CD4-positive, alpha-beta memory T cell (primary cell): ENCODE measurements at regions of chr6 and their contacts with region 1.

Region 1: DNA sequence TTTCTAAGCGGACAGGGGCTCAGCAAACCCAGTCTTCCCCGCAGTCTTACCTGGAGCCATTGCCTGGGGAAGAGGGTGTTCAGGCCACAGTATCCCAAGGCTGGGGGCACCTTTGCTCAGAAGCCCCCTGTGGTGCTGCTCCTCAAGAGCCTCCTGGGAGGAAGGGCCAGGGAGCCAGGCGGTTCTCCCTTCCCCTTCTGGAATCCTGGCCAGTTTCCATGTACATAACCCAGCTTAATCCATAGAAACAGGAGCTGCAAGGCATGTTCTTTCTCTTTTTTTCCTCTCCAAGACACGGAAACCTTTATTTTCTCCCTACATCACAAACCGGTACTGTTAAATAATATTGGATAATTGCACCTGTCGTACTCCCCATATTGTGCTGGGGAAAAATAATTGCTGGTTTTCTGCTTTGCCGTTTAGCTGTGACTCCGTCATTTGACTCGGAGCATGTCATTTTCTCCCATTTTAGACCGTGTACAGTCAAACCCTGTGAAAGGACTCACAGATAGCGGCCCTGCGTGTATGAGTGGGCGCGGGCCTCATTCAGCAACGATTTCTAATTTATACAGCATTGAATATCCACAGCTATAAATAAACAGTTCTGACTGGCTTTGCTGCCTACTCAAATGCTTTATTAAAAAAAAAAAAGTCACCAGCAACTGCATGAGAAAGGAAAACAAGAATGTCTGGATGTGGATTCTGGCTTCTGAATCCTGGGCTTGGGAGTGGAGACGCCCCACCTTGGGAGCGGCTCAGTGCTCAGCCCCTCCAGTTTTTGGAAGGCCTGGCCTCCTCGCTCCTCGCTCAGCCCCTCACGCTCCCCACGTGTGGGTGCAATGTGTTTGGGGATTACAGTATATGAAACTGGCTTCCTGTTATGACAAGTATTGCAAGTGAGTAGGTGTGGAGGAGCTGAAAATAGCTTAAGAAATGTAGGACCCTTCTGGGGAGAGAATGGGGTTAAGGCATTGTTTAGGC is 67.3 kb downstream of the ADTRP start:
- DNase-seq: peak in 1 of 5 donors; percentile 27
- H3K4me3 ChIP-seq: no peak overlapping the region
- H3K4me3 Mint-ChIP-seq: peak overlapping the region in 7 of 8 donors; percentile 14 to 85 (median 68)
- H3K27ac ChIP-seq: peak overlapping the region; percentile 39
- H3K27ac Mint-ChIP-seq: peak overlapping the region; percentile 89 to 98 (median 95)
- H3K4me1 ChIP-seq: peaks cover 65% of the 10 kb centered on the region
- H3K4me1 Mint-ChIP-seq: peaks cover 52 to 71% (median 63%) of the 10 kb centered on the region in 4 donors
- H3K27me3 ChIP-seq: no peaks in the 10 kb centered on the region
- H3K27me3 Mint-ChIP-seq: no peaks in the 10 kb centered on the region

Region 2: GRCh38 chr6:11685152-11686093 is 25.9 kb before region 1 on chr6:
- CTCF ChIA-PET with region 1: no interaction called
- POLR2A ChIA-PET with region 1: no interaction called
- intact Hi-C with region 1: no loop called
- DNase-seq: no peak
- H3K4me3 ChIP-seq: no peak overlapping the region
- H3K4me3 Mint-ChIP-seq: no peak overlapping the region
- H3K27ac ChIP-seq: no peak overlapping the region
- H3K27ac Mint-ChIP-seq: no peak overlapping the region
- H3K4me1 ChIP-seq: no peaks in the 10 kb centered on the region
- H3K4me1 Mint-ChIP-seq: no peaks in the 10 kb centered on the region
- H3K27me3 ChIP-seq: no peaks in the 10 kb centered on the region
- H3K27me3 Mint-ChIP-seq: peaks cover 4 to 18% of the 10 kb centered on the region in 2 donors

Region 3: GRCh38 chr6:11722805-11723631 is 11.7 kb after region 1 on chr6:
- CTCF ChIA-PET with region 1: interaction called, 16 read pairs
- POLR2A ChIA-PET with region 1: interaction called, 41 read pairs
- intact Hi-C with region 1: loop called (anchors 1 kb)
- DNase-seq: peak in 3 of 5 donors; percentile 22 to 44 (median 33)
- H3K4me3 ChIP-seq: peak overlapping the region in 1 of 2 donors; percentile 7
- H3K4me3 Mint-ChIP-seq: peak overlapping the region; percentile 67 to 83 (median 74)
- H3K27ac ChIP-seq: peak overlapping the region; percentile 30
- H3K27ac Mint-ChIP-seq: peak overlapping the region; percentile 33 to 95 (median 85)
- H3K4me1 ChIP-seq: peaks cover 26% of the 10 kb centered on the region
- H3K4me1 Mint-ChIP-seq: peaks cover 37 to 51% (median 40%) of the 10 kb centered on the region in 4 donors
- H3K27me3 ChIP-seq: no peaks in the 10 kb centered on the region
- H3K27me3 Mint-ChIP-seq: peaks cover 0 to 3% of the 10 kb centered on the region in 2 donors

Region 4: DNA sequence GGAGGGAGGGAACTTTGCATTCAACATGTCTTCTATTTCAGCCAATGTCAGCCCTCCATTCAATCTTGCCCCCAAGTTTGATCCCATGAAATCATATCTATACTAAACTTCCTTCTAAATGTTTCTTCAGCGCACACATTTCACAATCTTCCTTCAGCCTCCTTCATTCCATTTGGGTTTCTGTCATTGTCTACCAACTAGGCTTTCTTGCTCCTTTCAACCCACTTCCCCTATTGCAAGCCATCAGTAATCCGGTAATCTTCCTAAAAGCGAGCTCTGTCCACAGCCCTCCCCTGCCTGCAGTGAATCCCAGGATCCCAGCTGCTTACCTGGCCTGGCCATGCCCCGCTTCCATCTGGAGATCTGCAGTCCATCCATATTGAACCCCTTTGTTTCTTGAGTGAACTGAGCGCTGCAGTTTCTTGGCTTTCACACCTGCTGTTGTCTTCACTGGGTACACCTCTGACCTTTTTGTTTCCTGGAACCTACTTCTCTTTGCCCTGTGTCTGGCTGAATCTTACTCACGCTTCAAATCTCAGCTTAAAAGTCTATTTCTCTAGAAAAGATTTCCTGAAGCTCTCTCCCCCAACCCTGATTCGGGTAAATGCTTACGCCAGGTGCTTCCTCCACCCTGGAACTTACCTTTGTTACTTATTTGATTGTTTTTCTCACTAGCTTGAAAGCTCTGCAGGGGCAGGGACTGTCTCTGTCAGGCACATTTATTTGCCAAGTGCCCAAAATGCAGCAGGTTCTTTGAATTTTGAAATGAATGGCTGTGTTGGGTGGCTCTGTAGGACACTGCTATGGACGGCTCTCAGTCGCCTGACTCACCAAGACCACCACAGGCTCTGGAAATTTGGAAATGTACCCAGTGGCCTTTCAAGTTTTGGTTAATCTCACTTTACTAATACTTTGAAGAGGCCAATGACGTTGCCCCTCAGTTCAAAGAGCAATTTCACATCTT is 17.0 kb after region 1 on chr6:
- CTCF ChIA-PET with region 1: interaction called, 16 read pairs
- POLR2A ChIA-PET with region 1: interaction called, 41 read pairs
- intact Hi-C with region 1: loop called (anchors 1 kb)
- DNase-seq: peak in 4 of 5 donors; percentile 29 to 51 (median 37)
- H3K4me3 ChIP-seq: peak overlapping the region in 1 of 2 donors; percentile 32
- H3K4me3 Mint-ChIP-seq: peak overlapping the region; percentile 48 to 91 (median 84)
- H3K27ac ChIP-seq: peak overlapping the region; percentile 54
- H3K27ac Mint-ChIP-seq: peak overlapping the region; percentile 78 to 97 (median 91)
- H3K4me1 ChIP-seq: peaks cover 60% of the 10 kb centered on the region
- H3K4me1 Mint-ChIP-seq: peaks cover 52 to 76% (median 57%) of the 10 kb centered on the region in 4 donors
- H3K27me3 ChIP-seq: no peaks in the 10 kb centered on the region
- H3K27me3 Mint-ChIP-seq: peaks cover 0 to 3% of the 10 kb centered on the region in 2 donors

Region 5: GRCh38 chr6:11785774-11786579 is 74.7 kb after region 1 on chr6:
- CTCF ChIA-PET with region 1: no interaction called
- POLR2A ChIA-PET with region 1: interaction called, 13 read pairs
- intact Hi-C with region 1: no loop called
- DNase-seq: peak; percentile 26 to 59 (median 45)
- H3K4me3 ChIP-seq: peak overlapping the region; percentile 14 to 52
- H3K4me3 Mint-ChIP-seq: no peak overlapping the region
- H3K27ac ChIP-seq: peak overlapping the region; percentile 12
- H3K27ac Mint-ChIP-seq: peak overlapping the region in 4 of 7 donors; percentile 69 to 85 (median 75)
- H3K4me1 ChIP-seq: peaks cover 13% of the 10 kb centered on the region
- H3K4me1 Mint-ChIP-seq: peaks cover 0 to 11% (median 6%) of the 10 kb centered on the region in 4 donors
- H3K27me3 ChIP-seq: no peaks in the 10 kb centered on the region
- H3K27me3 Mint-ChIP-seq: peaks cover 0 to 2% of the 10 kb centered on the region in 2 donors

Region 6: DNA sequence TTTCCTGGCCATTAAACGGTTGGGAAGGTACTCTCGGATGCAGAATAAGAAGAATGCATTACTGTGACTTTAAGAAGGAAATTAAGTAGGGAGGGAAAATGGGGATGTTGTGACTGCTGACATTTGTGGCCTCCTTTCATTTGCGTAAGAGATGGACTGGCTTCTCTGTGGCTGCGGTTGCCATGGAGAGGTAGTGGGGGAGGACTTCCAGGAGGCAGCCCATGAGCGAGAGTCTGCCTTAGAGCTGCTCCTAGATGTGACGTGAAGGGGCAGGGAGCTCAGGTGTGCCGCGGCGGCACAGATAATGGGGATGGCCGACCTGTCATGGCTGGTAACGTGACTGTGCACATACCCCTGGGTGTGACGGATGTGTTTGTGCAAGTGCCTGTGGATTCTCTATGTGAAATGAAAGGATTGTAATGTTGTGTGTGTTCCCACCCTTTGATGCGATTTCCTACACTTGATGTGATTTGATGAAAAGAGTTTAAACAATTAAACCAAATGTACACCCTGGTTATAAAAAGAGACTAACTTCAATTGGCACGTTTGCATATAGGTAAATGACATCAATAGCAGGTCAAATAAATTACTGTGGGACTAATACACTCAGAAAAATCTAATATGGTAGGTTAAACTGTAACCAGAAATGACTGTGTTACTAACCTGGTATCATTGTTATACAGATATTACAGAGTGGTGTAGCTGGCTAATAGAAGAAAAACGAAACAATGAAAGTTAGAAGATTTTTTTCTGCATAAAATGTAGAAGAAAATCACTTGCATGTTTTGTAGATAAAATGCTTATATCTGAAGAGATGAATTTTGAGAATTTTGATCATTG is 349.7 kb after region 1 on chr6:
- CTCF ChIA-PET with region 1: no interaction called
- POLR2A ChIA-PET with region 1: interaction called, 5 read pairs
- intact Hi-C with region 1: loop called (anchors 5 kb)
- DNase-seq: peak; percentile 81 to 97 (median 87)
- H3K4me3 ChIP-seq: peak overlapping the region in 1 of 2 donors; percentile 40
- H3K4me3 Mint-ChIP-seq: peak overlapping the region; percentile 77 to 92 (median 88)
- H3K27ac ChIP-seq: peak overlapping the region; percentile 19
- H3K27ac Mint-ChIP-seq: peak overlapping the region; percentile 77 to 96 (median 91)
- H3K4me1 ChIP-seq: peaks cover 43% of the 10 kb centered on the region
- H3K4me1 Mint-ChIP-seq: peaks cover 39 to 65% (median 44%) of the 10 kb centered on the region in 4 donors
- H3K27me3 ChIP-seq: no peaks in the 10 kb centered on the region
- H3K27me3 Mint-ChIP-seq: no peaks in the 10 kb centered on the region